ENCODE measurements at regions of chr12 and their contacts with region 1.

Region 1: DNA sequence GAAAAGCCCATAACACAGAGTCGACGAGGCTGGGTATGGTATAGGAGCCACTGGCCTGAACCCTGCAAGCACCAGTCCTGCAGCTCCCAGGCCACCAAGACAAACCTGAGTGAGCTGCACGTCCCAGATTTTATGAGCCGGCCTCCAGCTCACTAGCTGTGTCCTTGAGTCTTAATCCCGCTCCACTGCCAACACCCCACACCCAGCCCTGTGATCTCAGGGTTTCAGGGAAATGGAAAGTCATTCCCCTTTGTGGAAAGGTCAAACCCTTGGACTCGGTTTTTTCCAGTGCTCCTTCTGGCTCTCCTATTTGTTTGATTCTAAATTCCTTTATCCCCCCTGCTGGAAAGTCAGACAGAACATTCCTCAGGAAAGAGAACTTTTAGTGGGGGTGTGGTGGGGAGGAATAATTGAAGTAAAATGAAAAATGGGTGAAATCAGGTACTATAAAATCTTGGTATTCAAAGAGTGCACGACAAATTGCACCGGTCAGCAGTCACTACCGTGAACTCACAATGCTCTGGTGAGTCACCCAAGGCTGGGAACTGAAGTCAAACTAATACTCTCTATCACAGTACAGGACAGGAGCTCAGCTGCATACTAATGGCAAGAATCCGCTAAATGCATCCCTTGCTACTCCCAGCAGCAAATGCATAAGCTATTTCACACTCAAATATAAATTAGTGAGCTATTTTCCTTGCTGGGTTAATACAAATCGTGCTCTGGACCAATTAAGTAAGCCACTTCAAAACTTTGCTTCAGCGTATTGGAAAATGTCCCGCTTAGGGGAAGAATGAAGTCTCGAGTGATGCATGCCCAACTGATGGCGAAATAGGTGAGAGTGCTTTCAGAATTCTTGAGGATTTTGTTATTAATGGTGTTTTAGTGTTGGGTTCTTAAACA is 9.0 kb downstream of the PITPNM2 start:
- DNase-seq: peak; percentile 87
- H3K4me3 ChIP-seq: no peak overlapping the region
- H3K27ac ChIP-seq: peak overlapping the region; percentile 94
- H3K4me1 ChIP-seq: peaks cover 21% of the 10 kb centered on the region
- H3K27me3 ChIP-seq: no peaks in the 10 kb centered on the region
- CTCF ChIP-seq: no peak

Region 2: DNA sequence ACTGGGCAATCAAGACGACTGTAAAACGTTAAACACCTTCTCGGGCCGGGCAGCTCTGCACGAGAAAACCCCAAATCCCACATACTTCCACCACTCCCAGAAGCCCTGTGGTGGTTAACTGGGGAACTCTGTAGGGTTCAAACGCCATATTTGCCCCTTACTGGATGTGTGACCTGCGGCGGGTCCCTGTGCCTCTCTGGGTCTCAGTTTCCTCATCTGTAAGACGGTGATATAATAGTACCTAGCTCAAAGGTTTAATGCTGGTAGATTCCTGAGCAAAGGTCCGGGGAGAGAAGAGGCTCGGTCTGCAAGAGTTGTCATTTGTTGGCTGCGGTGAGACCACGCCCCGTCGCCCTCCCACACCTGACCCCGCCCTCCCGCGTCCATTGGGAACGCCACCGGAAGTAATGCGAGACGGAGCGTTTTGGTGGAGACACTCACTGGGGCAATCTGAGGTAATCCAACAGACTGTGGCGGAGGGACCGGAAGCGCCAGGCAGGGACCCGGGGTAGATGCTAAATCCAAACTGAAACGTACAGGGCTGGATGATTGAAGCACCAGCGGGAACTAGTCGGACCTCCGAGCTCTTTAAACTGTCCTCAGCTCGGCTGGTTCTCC is 167.5 kb before region 1 on chr12:
- intact Hi-C with region 1: loop called (anchors 10 kb)
- DNase-seq: peak; percentile 100
- H3K4me3 ChIP-seq: peak overlapping the region; percentile 82
- H3K27ac ChIP-seq: peak overlapping the region; percentile 98
- H3K4me1 ChIP-seq: peaks cover 18% of the 10 kb centered on the region
- H3K27me3 ChIP-seq: no peaks in the 10 kb centered on the region
- CTCF ChIP-seq: no peak